Head of caudate nucleus (tissue), 42 donors: ENCODE measurements at regions of chr7 and their contacts with region 1.

Region 1: DNA sequence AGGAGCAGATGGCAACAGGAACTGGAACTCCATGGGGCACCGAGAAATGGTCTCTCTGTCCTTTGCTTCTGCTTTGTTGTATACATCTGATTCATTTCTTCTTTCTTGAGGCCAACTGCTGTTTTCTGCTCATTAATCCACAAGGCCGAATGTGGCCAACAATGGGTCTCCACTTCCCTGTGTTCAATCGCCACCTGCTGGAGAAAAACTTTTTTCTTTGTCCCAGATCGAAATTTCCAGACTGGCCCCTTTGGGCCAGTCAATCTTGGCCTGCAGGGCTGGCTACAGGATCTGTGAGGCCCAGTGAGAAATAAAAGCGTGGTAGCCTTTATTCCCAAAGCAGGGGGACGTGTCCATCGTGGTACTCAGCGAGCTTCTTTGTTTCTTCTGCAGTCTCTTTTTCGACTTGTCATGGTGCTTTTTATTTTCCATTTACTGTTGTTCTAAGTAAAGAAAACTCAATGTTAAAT is 58.8 kb downstream of the PARP12 start:
- DNase-seq: peak in 7 of 42 donors; percentile 8 to 55 (median 26)

Region 2: GRCh38 chr7:139451638-139452037 is 552.3 kb before region 1 on chr7:
- intact Hi-C with region 1: no loop called
- DNase-seq: peak; percentile 28 to 93 (median 71)

Region 3: GRCh38 chr7:139494835-139495579 is 508.9 kb before region 1 on chr7:
- intact Hi-C with region 1: loop called (anchors 10 kb)
- DNase-seq: peak in 37 of 42 donors; percentile 7 to 83 (median 47)

Region 4: GRCh38 chr7:139645572-139646523 is 358.1 kb before region 1 on chr7:
- intact Hi-C with region 1: loop called (anchors 5 kb)
- DNase-seq: peak; percentile 78 to 97 (median 90)

Region 5: GRCh38 chr7:139777948-139778841 is 225.8 kb before region 1 on chr7 and contains the start of gene HIPK2:
- intact Hi-C with region 1: loop called (anchors 5 kb)
- DNase-seq: peak; percentile 59 to 93 (median 83)